GM18951 (cell line): ENCODE measurements at regions of chr17 and their contacts with region 1.

Region 1: DNA sequence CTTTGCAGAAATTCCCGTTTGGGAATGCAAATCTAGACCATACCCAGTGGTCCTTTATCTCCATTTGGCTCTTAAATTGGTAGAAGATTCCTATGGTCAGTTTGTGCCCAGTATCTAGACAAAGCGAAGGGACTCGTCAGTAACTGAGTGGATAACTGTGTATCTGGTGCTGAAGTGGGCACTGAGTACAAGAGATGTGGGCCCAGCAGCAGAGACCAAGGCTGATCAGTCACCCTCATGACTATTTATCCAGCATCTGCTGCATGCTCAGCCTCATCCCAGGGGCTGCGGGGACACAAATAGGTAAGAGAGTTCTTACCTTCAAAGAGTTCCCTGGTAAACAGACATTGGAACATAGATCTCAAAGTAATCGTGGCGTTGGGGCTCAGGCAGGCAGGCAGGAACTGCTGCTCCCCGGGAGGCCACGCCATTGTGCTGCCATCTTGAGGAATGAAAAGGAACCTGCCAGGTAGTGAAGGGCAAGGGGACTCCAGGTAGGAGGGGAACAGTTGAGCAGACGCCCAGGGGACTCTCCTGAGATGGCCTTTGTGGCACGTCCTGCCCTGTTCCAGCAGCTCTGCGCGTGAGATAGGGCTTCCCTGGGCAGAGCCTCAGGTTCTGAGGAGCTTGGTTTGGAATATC is 10.3 kb downstream of the NT5M start:
- POLR2A ChIP-seq: no peak

Region 2: GRCh38 chr17:16991349-16992009 is 322.0 kb before region 1 on chr17:
- in situ Hi-C with region 1: loop called (anchors 10 kb)
- POLR2A ChIP-seq: no peak